Activated CD4-positive, alpha-beta T cell treated with anti-CD3 and anti-CD28 coated beads for 36 hours (primary cell): ENCODE measurements at regions of chr19 and their contacts with region 1.

Region 1: GRCh38 chr19:39125554-39126311 is at the start of gene PAK4:
- DNase-seq: peak; percentile 99
- ATAC-seq: peak; percentile 94
- H3K4me3 Mint-ChIP-seq: peak within 1 kb of the TSS; percentile 82
- H3K27ac Mint-ChIP-seq: peak within 1 kb of the TSS; percentile 90
- H3K4me1 Mint-ChIP-seq: peaks cover 25% of the 10 kb centered on the region
- H3K27me3 Mint-ChIP-seq: no peaks in the 10 kb centered on the region
- total RNA-seq, gene PAK4: 14.2 to 22.6 TPM

Region 2: DNA sequence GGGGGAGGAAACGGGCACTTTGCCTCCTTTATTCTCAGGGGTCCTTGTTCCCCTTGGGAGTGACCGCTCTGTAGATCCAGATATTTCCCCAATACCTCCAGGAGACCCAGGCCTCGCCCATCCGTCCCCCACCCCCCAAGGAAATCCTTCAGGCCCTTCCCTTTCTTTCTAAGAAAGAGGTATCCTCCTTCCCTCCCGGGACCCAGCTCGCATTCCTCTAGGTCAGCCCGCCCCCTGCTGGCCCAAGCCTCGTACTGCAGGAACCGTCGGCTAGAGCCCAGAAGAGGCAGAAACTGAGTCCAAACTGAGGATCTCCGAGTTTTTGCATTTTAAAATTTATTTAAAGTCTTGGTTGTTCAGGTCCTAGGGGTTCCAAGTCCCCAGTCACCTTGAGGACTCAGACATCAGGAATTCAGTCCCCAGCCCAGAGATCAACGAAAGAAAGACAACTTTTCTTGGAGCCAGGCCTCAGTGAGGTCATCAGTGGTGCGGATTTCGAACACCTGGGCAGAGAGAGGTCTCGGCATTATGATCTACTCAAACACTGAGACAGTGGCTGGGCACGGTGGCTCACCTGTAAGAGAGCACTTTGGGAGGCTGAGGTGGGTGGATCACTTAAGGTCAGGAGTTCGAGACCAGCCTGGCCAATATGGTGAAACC is 202.4 kb after region 1 on chr19:
- CTCF ChIA-PET with region 1: interaction called, 9 read pairs
- POLR2A ChIA-PET with region 1: no interaction called
- intact Hi-C with region 1: loop called (anchors 1 kb)
- DNase-seq: peak; percentile 90
- ATAC-seq: peak; percentile 39
- H3K4me3 Mint-ChIP-seq: no peak overlapping the region
- H3K27ac Mint-ChIP-seq: peak overlapping the region; percentile 51
- H3K4me1 Mint-ChIP-seq: peaks cover 40% of the 10 kb centered on the region
- H3K27me3 Mint-ChIP-seq: no peaks in the 10 kb centered on the region

Region 3: GRCh38 chr19:39341719-39342604 is 216.2 kb after region 1 on chr19 and contains the start of gene SAMD4B:
- CTCF ChIA-PET with region 1: interaction called, 4 read pairs
- POLR2A ChIA-PET with region 1: no interaction called
- intact Hi-C with region 1: loop called in 1 of 2 experiments (anchors 1 kb)
- DNase-seq: peak; percentile 100
- ATAC-seq: peak; percentile 90
- H3K4me3 Mint-ChIP-seq: peak within 1 kb of the TSS; percentile 83
- H3K27ac Mint-ChIP-seq: peak within 1 kb of the TSS; percentile 88
- H3K4me1 Mint-ChIP-seq: peaks cover 69% of the 10 kb centered on the region
- H3K27me3 Mint-ChIP-seq: no peaks in the 10 kb centered on the region
- total RNA-seq, gene SAMD4B: 45.2 to 46.9 TPM

Region 4: GRCh38 chr19:39480337-39481228 is 354.9 kb after region 1 on chr19 and contains the start of gene TIMM50:
- CTCF ChIA-PET with region 1: no interaction called
- POLR2A ChIA-PET with region 1: no interaction called
- intact Hi-C with region 1: loop called in 1 of 2 experiments (anchors 1 kb)
- DNase-seq: peak; percentile 100
- ATAC-seq: peak; percentile 94
- H3K4me3 Mint-ChIP-seq: peak within 1 kb of the TSS; percentile 95
- H3K27ac Mint-ChIP-seq: peak within 1 kb of the TSS; percentile 92
- H3K4me1 Mint-ChIP-seq: peaks cover 24% of the 10 kb centered on the region
- H3K27me3 Mint-ChIP-seq: no peaks in the 10 kb centered on the region
- total RNA-seq, gene TIMM50: 99.4 to 126 TPM

Region 5: GRCh38 chr19:39506944-39507714 is 381.4 kb after region 1 on chr19:
- CTCF ChIA-PET with region 1: no interaction called
- POLR2A ChIA-PET with region 1: no interaction called
- intact Hi-C with region 1: no loop called
- DNase-seq: peak; percentile 81
- ATAC-seq: peak; percentile 79
- H3K4me3 Mint-ChIP-seq: peak overlapping the region; percentile 76
- H3K27ac Mint-ChIP-seq: no peak overlapping the region
- H3K4me1 Mint-ChIP-seq: peaks cover 18% of the 10 kb centered on the region
- H3K27me3 Mint-ChIP-seq: peaks cover 47% of the 10 kb centered on the region

Region 6: GRCh38 chr19:39539519-39540332 is 414.0 kb after region 1 on chr19 and contains the start of gene EID2:
- CTCF ChIA-PET with region 1: no interaction called
- POLR2A ChIA-PET with region 1: no interaction called
- intact Hi-C with region 1: loop called (anchors 2 to 5 kb)
- DNase-seq: peak; percentile 98
- ATAC-seq: peak; percentile 80
- H3K4me3 Mint-ChIP-seq: peak within 1 kb of the TSS; percentile 84
- H3K27ac Mint-ChIP-seq: peak within 1 kb of the TSS; percentile 94
- H3K4me1 Mint-ChIP-seq: peaks cover 53% of the 10 kb centered on the region
- H3K27me3 Mint-ChIP-seq: no peaks in the 10 kb centered on the region
- total RNA-seq, gene EID2: 9.0 to 10.7 TPM